ENCODE measurements at regions of chr1 and their contacts with region 1.

Region 1: DNA sequence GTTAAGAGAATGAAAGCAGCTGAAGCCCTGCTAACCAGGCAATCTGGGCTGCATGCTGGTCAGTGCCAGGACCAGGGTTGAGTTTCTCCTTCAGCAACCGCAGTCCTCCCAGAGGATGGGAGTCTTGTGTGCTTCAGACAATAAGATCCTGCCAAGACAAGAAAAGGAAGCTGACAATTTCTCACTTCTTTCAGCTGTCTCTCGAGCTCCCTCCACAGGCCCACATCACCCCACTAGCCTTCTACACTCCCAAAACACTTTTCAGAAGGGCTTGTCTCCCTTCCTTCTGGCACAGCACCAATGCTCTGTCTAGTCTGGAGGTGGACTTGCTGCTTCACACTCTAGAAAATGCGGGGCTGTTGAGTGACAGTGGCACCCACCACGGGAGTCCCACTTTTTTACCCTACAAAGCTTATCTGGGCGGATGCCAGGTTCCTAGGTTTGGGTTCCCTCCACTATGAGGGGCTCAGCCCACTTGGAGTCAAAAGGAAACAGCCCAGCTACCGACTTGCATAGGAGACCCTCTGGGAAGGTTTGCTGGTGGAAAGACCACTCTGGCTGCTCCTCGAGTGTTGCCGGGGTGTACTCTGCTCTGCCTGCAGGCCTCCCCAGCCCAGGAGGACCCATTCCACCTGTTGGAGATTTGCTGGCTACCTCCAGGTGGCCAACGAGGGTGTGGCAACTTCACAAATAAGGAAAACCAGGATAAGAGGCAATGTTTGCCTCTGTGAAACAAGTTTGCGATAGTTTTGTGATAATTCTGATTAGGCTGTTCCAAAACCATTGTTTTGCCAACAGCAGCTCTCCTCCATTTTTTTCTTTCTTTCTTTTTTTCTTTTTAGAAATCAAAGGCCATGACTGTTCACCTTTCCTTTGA is 68.9 kb downstream of the TENT5C start:
- DNase-seq: no peak
- H3K4me3 ChIP-seq: no peak overlapping the region
- H3K27ac ChIP-seq: no peak overlapping the region
- H3K4me1 ChIP-seq: peaks cover 12% of the 10 kb centered on the region
- H3K27me3 ChIP-seq: no peaks in the 10 kb centered on the region
- CTCF ChIP-seq: peak; percentile 20 to 62

Region 2: DNA sequence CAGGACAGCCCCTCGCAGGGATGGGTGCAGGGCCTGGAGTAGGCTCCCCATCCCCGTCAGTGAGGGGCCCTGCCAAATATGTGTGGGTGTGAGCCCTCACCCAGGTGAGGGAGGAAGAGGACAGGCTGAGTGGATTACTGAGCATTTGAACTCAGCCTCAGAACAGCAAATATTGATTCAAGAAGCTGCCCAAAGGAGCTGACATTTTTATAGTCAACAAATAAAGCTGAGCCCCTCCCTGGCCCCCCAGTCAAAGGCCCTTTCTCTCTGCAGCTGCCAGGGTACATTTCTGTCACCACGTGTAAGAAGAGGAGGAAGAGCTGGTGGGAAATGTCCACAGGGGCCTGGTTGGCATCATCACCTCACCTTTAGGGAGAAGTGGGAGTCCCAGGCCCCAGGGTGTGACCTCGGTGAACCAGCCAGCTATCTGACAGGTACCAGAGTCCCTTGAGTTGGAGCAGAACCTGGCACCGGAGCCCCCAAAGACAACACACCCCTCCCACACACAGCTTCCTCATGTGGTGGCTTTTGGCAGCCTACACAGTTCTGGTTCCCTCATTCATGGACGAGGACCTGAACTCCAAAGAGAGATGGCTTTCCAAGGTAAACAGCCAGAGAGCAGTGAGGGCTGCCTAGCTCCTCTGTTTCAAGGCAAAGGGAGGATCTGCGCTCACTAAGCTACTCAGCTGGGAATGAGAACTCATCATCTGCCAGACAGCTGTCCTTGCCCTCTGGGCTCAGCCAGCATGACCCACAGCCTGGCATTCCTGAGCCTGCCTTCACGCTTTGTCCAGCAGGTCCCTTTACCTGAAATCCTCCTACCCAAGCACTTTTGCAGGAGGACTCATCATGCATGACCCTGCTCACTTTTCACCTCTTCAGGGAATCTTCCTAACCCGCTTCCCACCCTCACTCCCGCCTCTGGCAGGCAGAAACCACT is 111.9 kb before region 1 on chr1:
- CTCF ChIA-PET with region 1: no interaction called
- dilution Hi-C with region 1: no loop called
- in situ Hi-C with region 1: no loop called
- intact Hi-C with region 1: loop called (anchors 5 kb)
- DNase-seq: no peak
- H3K4me3 ChIP-seq: no peak overlapping the region
- H3K27ac ChIP-seq: no peak overlapping the region
- H3K4me1 ChIP-seq: no peaks in the 10 kb centered on the region
- H3K27me3 ChIP-seq: no peaks in the 10 kb centered on the region
- CTCF ChIP-seq: no peak

Region 3: DNA sequence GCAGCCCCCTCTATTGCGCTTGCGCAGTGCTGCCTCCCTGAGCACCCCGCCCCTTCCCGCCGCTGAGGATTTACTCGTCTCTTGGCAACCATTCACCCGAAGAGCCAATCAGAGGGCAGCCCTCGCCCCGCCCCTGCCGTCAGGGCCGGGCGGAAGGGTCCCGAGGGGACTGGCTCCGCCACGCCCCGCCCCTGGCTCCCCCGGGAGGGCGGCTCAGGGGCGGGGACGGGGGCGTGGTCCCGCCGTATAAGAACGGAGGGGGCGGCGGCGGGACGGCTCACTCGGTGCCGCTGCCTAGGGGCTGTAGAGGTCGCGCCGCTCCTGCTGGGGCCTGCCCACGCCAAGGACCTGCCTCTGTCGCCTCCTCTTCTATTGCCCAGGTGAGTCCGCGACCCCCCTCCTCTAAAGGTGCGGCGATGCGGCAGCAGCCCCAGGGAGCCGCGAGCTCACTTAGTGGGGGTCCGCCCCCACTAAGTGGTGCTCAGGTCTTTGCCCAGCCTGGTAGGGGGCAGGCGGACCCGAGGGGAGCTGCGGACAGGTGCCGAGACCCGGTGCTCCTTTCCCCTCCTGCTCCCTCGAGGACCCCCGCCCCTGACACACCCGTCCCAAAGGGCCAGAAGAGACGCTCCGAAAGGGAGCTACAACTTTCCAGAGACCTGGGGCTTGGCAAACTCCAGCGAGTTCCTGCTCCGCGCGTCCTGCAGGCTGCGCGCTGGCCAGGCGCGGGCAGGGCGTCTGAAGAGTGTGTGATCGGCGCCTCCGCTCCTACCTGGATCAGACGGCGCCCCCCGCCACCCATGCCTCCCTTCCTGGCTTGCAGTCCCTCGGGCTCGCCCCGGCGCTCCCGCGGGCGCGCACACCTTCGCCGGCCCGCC is 68.7 kb before region 1 on chr1 and contains the start of gene TENT5C:
- CTCF ChIA-PET with region 1: no interaction called
- dilution Hi-C with region 1: no loop called
- in situ Hi-C with region 1: no loop called
- intact Hi-C with region 1: loop called (anchors 5 kb)
- DNase-seq: peak; percentile 96
- H3K4me3 ChIP-seq: peak within 1 kb of the TSS; percentile 71 to 77 (median 77)
- H3K27ac ChIP-seq: peak within 1 kb of the TSS; percentile 67
- H3K4me1 ChIP-seq: peaks cover 22% of the 10 kb centered on the region
- H3K27me3 ChIP-seq: peaks cover 4% of the 10 kb centered on the region
- CTCF ChIP-seq: no peak
- total RNA-seq, gene TENT5C: 0.17 to 0.35 TPM

Measured in mammary epithelial cell (primary cell).